ENCODE measurements at regions of chr4 and their contacts with region 1.

Region 1: GRCh38 chr4:139603576-139604387 is 47.8 kb upstream of the SETD7 start:
- DNase-seq: no peak
- ATAC-seq: peak; percentile 77

Region 2: DNA sequence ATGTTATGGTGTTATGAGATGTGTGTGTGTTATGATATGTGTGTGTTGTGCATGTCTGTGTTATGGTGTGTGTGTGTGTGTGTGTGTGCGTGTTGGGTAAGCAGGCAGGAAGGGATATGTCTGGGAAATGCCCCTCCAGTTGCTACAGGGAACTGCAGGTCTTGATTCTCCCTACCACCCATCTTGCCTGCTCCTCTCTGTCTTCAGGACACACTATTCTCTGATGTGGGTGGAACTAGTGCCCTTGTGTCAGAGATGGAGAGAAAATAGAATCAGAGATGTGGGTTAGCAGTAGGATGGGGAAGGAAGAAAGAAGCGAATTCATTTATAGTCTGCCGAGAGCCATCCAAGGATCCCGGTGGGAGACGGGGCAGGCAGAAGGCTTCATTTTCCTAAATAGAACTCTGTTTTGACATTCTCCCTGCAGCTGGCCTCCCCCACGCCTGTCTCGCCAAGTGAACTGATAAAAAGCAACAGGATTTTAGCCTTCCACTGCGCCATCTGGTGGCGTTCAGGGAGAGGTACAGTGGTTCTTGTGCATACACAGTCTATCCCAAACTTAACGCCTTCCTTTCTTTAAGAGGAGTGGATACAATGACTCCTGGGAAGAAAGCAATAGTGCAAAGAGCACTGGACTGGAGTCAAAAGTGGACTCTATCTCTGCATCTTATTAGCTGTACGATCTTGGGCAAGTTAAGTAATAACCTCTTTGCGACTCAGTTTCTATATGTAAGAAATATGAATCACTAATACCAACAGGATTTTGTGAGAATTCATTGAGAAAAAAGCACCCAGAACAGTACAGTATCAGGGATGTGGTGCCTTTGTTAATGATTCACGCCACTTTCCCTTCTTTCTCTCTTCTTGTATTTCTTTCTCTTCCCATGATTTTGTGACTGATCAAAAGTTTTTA is 47.8 kb after region 1 on chr4:
- intact Hi-C with region 1: loop called (anchors 5 kb)
- DNase-seq: peak; percentile 85
- ATAC-seq: peak; percentile 94

Measured in Right ventricle myocardium superior (tissue), 1 donor.